Common myeloid progenitor, CD34-positive (primary cell): ENCODE measurements at regions of chr12 and their contacts with region 1.

Region 1: DNA sequence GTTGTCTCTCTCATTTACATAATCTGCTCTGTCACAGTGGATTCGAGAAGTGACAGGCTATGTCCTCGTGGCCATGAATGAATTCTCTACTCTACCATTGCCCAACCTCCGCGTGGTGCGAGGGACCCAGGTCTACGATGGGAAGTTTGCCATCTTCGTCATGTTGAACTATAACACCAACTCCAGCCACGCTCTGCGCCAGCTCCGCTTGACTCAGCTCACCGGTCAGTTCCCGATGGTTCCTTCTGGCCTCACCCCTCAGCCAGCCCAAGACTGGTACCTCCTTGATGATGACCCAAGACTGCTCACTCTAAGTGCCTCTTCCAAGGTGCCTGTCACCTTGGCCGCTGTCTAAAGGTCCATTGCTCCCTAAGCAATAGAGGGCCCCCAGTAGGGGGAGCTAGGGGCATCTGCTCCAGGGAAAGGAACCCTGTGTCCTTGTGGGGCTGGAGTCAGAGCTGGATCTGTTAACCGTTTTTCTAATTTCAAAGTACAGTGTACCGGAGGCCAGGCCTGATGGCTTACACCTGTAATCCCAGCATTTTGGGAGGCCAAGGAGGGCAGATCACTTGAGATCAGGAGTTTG is 5.1 kb downstream of the ERBB3 start:
- DNase-seq: peak in 2 of 3 donors; percentile 23 to 40
- H3K4me3 ChIP-seq: no peak overlapping the region
- H3K27ac ChIP-seq: no peak overlapping the region
- H3K4me1 ChIP-seq: peaks cover 0 to 7% (median 5%) of the 10 kb centered on the region in 4 experiments
- H3K27me3 ChIP-seq: peaks cover 0 to 35% (median 20%) of the 10 kb centered on the region in 5 experiments

Region 2: GRCh38 chr12:56098592-56098991 is 13.5 kb after region 1 on chr12:
- CTCF ChIA-PET with region 1: interaction called, 16 read pairs
- POLR2A ChIA-PET with region 1: no interaction called
- DNase-seq: no peak
- H3K4me3 ChIP-seq: no peak overlapping the region
- H3K27ac ChIP-seq: no peak overlapping the region
- H3K4me1 ChIP-seq: peaks cover 8 to 11% (median 9%) of the 10 kb centered on the region in 4 experiments
- H3K27me3 ChIP-seq: peaks cover 0 to 6% (median 0%) of the 10 kb centered on the region in 5 experiments